Naive thymus-derived CD4-positive, alpha-beta T cell (primary cell): ENCODE measurements at regions of chr5 and their contacts with region 1.

Region 1: DNA sequence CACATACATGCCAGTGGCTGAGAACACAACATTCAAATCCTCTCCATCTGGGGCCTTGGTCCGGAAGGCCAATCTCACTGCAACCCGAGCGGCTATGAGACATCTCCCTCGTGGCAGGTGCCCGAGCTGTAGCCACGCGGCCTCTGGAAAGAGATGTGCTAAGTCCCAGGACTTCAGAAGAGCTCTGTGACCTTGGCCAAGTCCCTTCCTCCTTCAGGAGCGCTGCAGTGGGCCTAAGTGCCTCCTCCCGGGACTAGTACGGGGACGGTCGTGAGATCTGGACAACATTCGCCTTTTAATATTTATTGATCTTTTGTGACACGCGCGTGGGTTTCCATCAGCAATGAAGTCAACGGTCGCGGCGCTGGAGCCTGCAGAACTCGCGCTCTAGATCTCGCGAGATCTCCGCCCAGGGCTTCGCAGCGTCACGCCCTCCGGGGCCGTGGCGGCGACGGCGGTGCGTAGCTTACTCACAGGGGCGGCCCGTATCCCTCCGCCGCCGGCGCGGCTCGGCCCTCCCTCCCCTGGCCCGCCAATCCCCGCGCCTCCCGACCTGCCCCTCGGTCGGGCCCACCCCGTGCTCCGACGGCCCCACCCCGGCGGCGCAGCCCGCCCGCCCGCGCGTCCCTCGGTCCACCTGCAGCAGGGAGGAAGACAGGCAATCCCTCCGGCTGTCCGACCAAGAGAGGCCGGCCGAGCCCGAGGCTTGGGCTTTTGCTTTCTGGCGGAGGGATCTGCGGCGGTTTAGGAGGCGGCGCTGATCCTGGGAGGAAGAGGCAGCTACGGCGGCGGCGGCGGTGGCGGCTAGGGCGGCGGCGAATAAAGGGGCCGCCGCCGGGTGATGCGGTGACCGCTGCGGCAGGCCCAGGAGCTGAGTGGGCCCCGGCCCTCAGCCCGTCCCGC is at the start of gene UBE2D2:
- DNase-seq: peak; percentile 95 to 98 (median 97)
- ATAC-seq: peak; percentile 94
- H3K4me3 ChIP-seq: peak within 1 kb of the TSS; percentile 85
- H3K4me3 Mint-ChIP-seq: peak within 1 kb of the TSS; percentile 90 to 100 (median 98)
- H3K27ac ChIP-seq: peak within 1 kb of the TSS; percentile 92
- H3K27ac Mint-ChIP-seq: peak within 1 kb of the TSS; percentile 88 to 98 (median 95)
- H3K4me1 ChIP-seq: peaks cover 26 to 36% of the 10 kb centered on the region in 2 donors
- H3K4me1 Mint-ChIP-seq: peaks cover 28 to 39% (median 34%) of the 10 kb centered on the region in 7 donors
- H3K27me3 ChIP-seq: no peaks in the 10 kb centered on the region
- H3K27me3 Mint-ChIP-seq: no peaks in the 10 kb centered on the region
- total RNA-seq, gene UBE2D2: 145 to 214 (median 184) TPM

Region 2: DNA sequence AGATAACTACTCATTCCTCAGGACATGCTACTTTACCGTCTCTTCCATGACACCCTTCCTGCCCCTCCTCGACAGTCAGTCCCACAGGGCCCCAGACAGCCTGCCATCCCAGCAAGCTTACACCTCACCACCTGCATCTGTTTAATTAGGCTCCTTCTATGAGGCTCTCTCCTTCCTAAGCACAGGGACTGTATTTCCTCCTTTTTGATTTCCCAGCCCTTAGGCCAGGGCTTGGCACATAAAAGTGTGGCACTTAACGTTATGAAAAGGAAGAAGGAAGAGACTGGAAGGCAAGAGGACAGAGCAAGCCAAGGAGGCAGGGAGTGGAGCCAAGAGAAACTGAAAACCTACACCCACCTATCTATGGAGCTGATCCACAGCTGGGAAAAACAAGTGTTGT is 509.6 kb before region 1 on chr5:
- CTCF ChIA-PET with region 1: no interaction called
- POLR2A ChIA-PET with region 1: no interaction called
- intact Hi-C with region 1: no loop called
- DNase-seq: no peak
- ATAC-seq: no peak
- H3K4me3 ChIP-seq: no peak overlapping the region
- H3K4me3 Mint-ChIP-seq: no peak overlapping the region
- H3K27ac ChIP-seq: no peak overlapping the region
- H3K27ac Mint-ChIP-seq: peak overlapping the region in 1 of 9 donors; percentile 33
- H3K4me1 ChIP-seq: no peaks in the 10 kb centered on the region
- H3K4me1 Mint-ChIP-seq: peaks cover 0 to 6% (median 0%) of the 10 kb centered on the region in 7 donors
- H3K27me3 ChIP-seq: no peaks in the 10 kb centered on the region
- H3K27me3 Mint-ChIP-seq: no peaks in the 10 kb centered on the region

Region 3: DNA sequence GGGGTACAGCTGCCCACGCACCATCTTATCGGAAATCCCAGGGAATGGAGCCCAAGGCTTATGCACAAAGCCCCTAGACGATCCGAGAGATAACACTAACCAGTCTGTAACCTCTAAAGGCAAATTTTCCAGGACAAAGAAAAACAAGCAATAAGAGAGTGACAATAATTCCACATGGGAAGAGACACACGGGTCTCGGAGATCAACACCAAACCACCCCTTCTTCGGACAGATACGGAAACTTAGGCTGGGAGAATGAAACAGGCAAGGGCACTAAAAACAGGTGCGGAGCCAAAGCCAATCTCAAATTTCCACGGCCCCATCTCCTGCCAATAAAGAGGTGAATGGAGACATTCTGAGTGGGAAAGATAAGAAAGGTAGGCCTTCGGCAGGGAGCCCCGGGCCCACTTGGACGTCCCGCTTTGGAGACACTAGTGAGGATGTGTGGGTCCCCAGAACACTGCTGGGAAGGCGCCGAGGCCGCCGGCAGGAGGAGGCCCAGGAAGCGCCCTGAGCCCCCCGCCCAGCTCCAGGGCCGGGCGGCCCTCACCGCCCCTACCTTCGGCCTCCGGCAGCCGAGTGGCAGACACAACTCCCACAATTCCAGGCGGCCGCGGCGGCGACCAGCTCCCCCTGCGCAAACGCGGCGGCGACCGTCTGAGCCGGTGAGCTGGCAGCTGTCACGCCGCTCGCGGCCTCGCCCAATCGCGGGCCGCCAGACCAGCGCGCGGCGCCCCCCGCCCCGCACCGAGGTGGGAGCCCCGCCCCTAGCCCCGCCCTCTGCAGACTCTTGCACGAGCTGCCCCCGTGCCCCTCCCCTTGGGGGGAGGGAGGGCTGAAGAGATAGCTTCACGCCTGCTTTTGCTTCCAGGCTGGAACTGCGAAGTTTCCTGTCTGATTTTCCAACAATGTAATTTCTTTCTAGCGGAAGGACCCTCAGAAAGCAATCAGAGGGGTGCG is 363.0 kb before region 1 on chr5 and contains the start of gene SIL1:
- CTCF ChIA-PET with region 1: no interaction called
- POLR2A ChIA-PET with region 1: no interaction called
- intact Hi-C with region 1: loop called in 1 of 2 experiments (anchors 1 kb)
- DNase-seq: peak; percentile 88 to 94 (median 91)
- ATAC-seq: peak; percentile 99
- H3K4me3 ChIP-seq: peak within 1 kb of the TSS; percentile 97
- H3K4me3 Mint-ChIP-seq: peak within 1 kb of the TSS; percentile 83 to 96 (median 90)
- H3K27ac ChIP-seq: peak within 1 kb of the TSS; percentile 89
- H3K27ac Mint-ChIP-seq: peak within 1 kb of the TSS; percentile 86 to 96 (median 91)
- H3K4me1 ChIP-seq: peaks cover 8% of the 10 kb centered on the region in 2 donors
- H3K4me1 Mint-ChIP-seq: peaks cover 17 to 38% (median 26%) of the 10 kb centered on the region in 7 donors
- H3K27me3 ChIP-seq: no peaks in the 10 kb centered on the region
- H3K27me3 Mint-ChIP-seq: no peaks in the 10 kb centered on the region
- total RNA-seq, gene SIL1: 11.9 to 27.1 (median 22.8) TPM

Region 4: GRCh38 chr5:139403787-139404483 is 157.1 kb before region 1 on chr5 and contains the start of gene SPATA24:
- CTCF ChIA-PET with region 1: no interaction called
- POLR2A ChIA-PET with region 1: interaction called, 5 read pairs
- intact Hi-C with region 1: loop called (anchors 1 kb)
- DNase-seq: peak; percentile 90 to 99 (median 98)
- ATAC-seq: peak; percentile 94
- H3K4me3 ChIP-seq: peak within 1 kb of the TSS; percentile 56
- H3K4me3 Mint-ChIP-seq: peak within 1 kb of the TSS; percentile 88 to 98 (median 94)
- H3K27ac ChIP-seq: peak within 1 kb of the TSS; percentile 88
- H3K27ac Mint-ChIP-seq: peak within 1 kb of the TSS; percentile 96 to 100 (median 99)
- H3K4me1 ChIP-seq: peaks cover 16 to 18% of the 10 kb centered on the region in 2 donors
- H3K4me1 Mint-ChIP-seq: peaks cover 26 to 42% (median 36%) of the 10 kb centered on the region in 7 donors
- H3K27me3 ChIP-seq: no peaks in the 10 kb centered on the region
- H3K27me3 Mint-ChIP-seq: no peaks in the 10 kb centered on the region
- total RNA-seq, gene SPATA24: 4.4 to 7.6 (median 5.8) TPM

Region 5: DNA sequence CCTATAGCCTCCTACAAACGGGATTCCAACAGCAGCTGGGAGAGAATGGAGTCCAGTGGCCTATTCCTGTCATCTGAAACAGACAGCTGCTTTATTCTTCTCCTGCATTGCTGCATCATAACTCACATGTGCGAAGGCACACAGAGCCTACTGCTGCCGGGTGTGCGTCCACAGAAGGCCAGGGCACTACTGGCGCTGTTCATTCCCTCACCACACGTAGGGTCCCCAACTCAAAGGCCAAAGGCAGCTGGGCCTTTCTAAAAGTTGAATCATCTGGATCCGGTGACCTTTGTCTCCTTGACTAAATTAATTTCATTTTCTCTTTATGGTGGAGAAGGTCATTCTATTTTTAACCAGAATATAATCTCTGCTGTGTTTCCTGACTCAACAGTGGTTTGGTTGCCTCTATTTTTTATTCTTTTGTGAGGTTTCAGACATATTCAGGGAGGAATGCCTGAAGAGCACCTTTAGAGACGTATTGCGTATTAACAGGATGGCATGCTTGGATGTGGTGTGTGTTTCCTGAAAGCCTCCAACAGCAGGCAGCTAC is 146.3 kb before region 1 on chr5:
- CTCF ChIA-PET with region 1: no interaction called
- POLR2A ChIA-PET with region 1: no interaction called
- intact Hi-C with region 1: no loop called
- DNase-seq: peak in 4 of 9 donors; percentile 25 to 43 (median 34)
- ATAC-seq: peak; percentile 67
- H3K4me3 ChIP-seq: no peak overlapping the region
- H3K4me3 Mint-ChIP-seq: peak overlapping the region in 5 of 10 donors; percentile 25 to 83 (median 41)
- H3K27ac ChIP-seq: no peak overlapping the region
- H3K27ac Mint-ChIP-seq: peak overlapping the region in 6 of 9 donors; percentile 7 to 93 (median 26)
- H3K4me1 ChIP-seq: peaks cover 0 to 17% of the 10 kb centered on the region in 2 donors
- H3K4me1 Mint-ChIP-seq: peaks cover 2 to 68% (median 25%) of the 10 kb centered on the region in 7 donors
- H3K27me3 ChIP-seq: no peaks in the 10 kb centered on the region
- H3K27me3 Mint-ChIP-seq: no peaks in the 10 kb centered on the region

Region 6: GRCh38 chr5:139517683-139518564 is 43.1 kb before region 1 on chr5:
- CTCF ChIA-PET with region 1: interaction called, 11 read pairs
- POLR2A ChIA-PET with region 1: interaction called, 15 read pairs
- intact Hi-C with region 1: loop called (anchors 1 kb)
- DNase-seq: peak; percentile 78 to 97 (median 89)
- ATAC-seq: peak; percentile 97
- H3K4me3 ChIP-seq: peak overlapping the region; percentile 79
- H3K4me3 Mint-ChIP-seq: peak overlapping the region; percentile 88 to 93 (median 90)
- H3K27ac ChIP-seq: peak overlapping the region; percentile 90
- H3K27ac Mint-ChIP-seq: peak overlapping the region; percentile 93 to 99 (median 96)
- H3K4me1 ChIP-seq: peaks cover 0 to 3% of the 10 kb centered on the region in 2 donors
- H3K4me1 Mint-ChIP-seq: peaks cover 14 to 34% (median 26%) of the 10 kb centered on the region in 7 donors
- H3K27me3 ChIP-seq: no peaks in the 10 kb centered on the region
- H3K27me3 Mint-ChIP-seq: no peaks in the 10 kb centered on the region

Region 7: DNA sequence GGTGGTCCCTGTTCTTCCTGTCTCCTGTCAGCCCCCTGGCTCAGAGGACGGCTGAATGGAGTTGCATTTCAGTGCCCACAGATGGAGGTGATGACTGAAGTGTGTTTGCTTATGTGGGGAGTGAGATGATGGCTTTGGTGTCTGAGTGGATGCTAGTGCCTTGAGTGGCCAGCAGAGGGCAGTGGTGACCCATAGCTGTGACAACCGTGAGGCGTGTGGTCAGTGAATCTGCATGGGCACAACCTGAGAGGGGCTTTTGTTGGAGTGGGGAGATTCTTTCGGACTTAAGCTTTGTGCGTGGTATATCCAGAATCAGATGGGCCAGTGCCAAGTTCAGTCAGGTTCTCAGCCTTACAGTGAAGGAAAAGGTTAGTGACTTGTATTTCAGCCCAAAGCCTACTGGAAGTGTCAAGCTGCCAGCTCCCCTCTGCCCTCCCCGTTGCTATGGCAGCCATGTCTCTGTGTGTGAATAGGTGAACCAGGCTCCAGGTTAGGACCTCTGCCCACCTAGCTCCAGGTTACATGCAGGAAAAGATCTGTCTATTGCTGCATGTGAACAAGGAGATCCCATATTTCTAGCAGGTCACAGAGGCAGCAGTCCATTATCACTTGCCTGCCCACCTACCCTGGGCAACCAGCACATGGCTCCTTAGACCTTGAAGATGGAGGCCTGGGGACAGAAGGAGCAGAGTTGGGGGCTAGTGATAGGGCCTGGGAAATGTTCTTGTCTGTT is 72.5 kb after region 1 on chr5:
- CTCF ChIA-PET with region 1: interaction called, 12 read pairs
- POLR2A ChIA-PET with region 1: interaction called, 8 read pairs
- intact Hi-C with region 1: loop called (anchors 2 kb)
- DNase-seq: peak; percentile 49 to 68 (median 62)
- ATAC-seq: peak; percentile 66
- H3K4me3 ChIP-seq: no peak overlapping the region
- H3K4me3 Mint-ChIP-seq: no peak overlapping the region
- H3K27ac ChIP-seq: no peak overlapping the region
- H3K27ac Mint-ChIP-seq: peak overlapping the region in 6 of 9 donors; percentile 3 to 41 (median 22)
- H3K4me1 ChIP-seq: peaks cover 27 to 28% of the 10 kb centered on the region in 2 donors
- H3K4me1 Mint-ChIP-seq: peaks cover 22 to 40% (median 39%) of the 10 kb centered on the region in 7 donors
- H3K27me3 ChIP-seq: no peaks in the 10 kb centered on the region
- H3K27me3 Mint-ChIP-seq: peaks cover 0 to 5% (median 0%) of the 10 kb centered on the region in 5 donors

Region 8: GRCh38 chr5:140094889-140095288 is 533.9 kb after region 1 on chr5:
- CTCF ChIA-PET with region 1: no interaction called
- POLR2A ChIA-PET with region 1: no interaction called
- intact Hi-C with region 1: no loop called
- DNase-seq: no peak
- ATAC-seq: no peak
- H3K4me3 ChIP-seq: no peak overlapping the region
- H3K4me3 Mint-ChIP-seq: no peak overlapping the region
- H3K27ac ChIP-seq: no peak overlapping the region
- H3K27ac Mint-ChIP-seq: no peak overlapping the region
- H3K4me1 ChIP-seq: no peaks in the 10 kb centered on the region
- H3K4me1 Mint-ChIP-seq: no peaks in the 10 kb centered on the region
- H3K27me3 ChIP-seq: peaks cover 0 to 3% of the 10 kb centered on the region in 2 donors
- H3K27me3 Mint-ChIP-seq: peaks cover 8 to 41% (median 10%) of the 10 kb centered on the region in 5 donors

Region 9: DNA sequence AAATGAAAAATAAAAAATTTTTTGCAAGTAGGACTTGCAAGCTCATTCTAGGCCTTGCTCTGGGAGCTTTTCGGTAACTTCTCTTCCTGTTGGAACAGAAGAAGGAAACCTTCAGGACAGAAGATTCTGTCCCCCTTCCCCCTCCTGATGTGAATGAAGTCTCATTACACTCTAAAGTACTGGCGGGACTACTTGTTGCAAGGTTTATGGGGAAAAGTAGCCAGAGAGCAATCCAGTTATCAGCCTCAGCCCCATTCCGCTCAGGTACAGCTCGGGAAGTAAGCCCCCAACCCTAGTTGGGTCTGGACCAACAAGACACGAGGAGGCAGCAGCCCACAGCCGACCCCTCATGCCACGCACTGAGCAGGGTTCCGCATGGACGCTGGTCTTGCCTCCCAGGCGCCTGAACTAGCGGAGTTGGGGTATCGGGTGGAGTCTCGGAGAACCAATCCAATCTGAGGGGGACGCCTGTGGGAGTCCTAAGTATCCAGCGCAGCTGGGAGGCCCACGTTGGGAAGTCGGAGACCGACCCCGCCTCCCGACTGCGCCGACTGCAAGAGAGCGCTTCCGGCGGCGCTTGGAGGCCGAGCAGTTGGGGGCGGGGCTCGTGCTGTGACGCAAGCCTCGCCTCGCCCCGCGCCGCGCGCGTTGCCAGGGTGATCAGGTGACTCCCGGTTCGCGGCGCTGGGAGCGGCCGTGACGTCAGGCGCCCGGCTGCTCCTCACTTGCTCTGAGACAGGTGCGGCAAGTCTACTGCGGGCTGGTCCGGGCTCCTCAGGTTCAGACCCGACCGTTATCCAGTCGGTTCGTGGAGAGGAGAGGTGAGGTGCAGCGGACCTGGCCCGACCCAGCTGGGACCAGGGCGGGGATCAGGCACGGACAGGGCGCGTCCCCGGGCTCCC is 613.7 kb after region 1 on chr5 and contains the start of gene CYSTM1:
- CTCF ChIA-PET with region 1: no interaction called
- POLR2A ChIA-PET with region 1: no interaction called
- intact Hi-C with region 1: loop called in 1 of 2 experiments (anchors 10 kb)
- DNase-seq: peak; percentile 95 to 98 (median 97)
- ATAC-seq: peak; percentile 94
- H3K4me3 ChIP-seq: peak within 1 kb of the TSS; percentile 97
- H3K4me3 Mint-ChIP-seq: peak within 1 kb of the TSS; percentile 84 to 95 (median 91)
- H3K27ac ChIP-seq: peak within 1 kb of the TSS; percentile 89
- H3K27ac Mint-ChIP-seq: peak within 1 kb of the TSS; percentile 78 to 98 (median 95)
- H3K4me1 ChIP-seq: peaks cover 8 to 14% of the 10 kb centered on the region in 2 donors
- H3K4me1 Mint-ChIP-seq: peaks cover 7 to 20% (median 14%) of the 10 kb centered on the region in 7 donors
- H3K27me3 ChIP-seq: no peaks in the 10 kb centered on the region
- H3K27me3 Mint-ChIP-seq: peaks cover 0 to 30% (median 0%) of the 10 kb centered on the region in 5 donors
- total RNA-seq, gene CYSTM1: 1.6 to 11.1 (median 3.5) TPM